ENCODE measurements at regions of chr12 and their contacts with region 1.

Region 1: DNA sequence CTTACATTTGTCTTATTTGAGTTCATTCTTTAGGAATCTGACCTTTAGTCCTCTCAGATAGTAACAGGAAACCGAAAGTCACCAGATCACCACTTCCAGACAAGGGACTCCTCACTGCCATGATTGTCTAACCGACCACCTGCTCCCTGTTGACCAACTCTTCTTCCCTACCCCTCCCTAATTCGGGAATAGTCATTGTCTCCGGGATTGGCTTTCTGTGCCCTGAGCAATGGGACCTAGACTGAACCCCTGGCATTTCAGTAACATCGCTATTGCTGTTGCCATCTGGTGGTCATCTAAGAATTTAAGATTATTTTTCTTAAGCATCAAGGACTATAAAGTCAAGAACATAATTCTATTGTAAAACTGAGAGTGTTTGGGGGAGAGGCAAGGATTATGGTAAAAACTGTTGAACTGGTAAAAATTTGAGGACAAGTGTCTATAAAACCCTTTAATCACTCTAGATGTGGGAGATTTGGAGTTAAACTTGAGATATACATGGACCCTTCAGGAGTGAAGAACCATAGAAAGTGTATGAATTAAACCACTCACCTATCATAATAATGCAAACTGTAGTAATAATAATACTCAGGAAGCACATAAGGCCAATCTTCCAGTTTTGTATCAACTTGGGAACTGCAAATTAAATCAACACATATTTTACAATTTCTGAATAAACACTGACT is 6.3 kb downstream of the CLEC2A start:
- DNase-seq: no peak
- ATAC-seq: peak; percentile 59

Region 2: DNA sequence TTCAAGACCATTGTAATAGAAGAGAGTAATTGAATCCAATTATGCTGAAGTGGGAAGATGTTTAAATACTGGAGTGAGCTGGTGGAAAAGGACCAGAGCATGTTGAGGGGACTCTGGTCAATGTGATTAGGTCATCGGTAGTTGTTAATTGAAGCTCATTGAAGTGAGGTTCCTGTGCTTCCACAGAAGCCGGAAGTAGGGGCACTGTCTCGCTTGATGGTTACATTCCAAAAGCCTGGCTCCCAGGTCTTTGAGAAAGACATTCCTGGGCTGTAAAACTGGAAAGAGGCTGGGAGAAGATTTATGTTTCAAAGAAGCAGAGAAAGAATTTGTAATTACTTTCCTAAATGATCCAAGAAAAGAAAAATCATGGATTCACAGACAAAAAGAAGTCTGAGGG is 180.7 kb before region 1 on chr12:
- intact Hi-C with region 1: loop called (anchors 5 kb)
- DNase-seq: no peak
- ATAC-seq: no peak

Region 3: DNA sequence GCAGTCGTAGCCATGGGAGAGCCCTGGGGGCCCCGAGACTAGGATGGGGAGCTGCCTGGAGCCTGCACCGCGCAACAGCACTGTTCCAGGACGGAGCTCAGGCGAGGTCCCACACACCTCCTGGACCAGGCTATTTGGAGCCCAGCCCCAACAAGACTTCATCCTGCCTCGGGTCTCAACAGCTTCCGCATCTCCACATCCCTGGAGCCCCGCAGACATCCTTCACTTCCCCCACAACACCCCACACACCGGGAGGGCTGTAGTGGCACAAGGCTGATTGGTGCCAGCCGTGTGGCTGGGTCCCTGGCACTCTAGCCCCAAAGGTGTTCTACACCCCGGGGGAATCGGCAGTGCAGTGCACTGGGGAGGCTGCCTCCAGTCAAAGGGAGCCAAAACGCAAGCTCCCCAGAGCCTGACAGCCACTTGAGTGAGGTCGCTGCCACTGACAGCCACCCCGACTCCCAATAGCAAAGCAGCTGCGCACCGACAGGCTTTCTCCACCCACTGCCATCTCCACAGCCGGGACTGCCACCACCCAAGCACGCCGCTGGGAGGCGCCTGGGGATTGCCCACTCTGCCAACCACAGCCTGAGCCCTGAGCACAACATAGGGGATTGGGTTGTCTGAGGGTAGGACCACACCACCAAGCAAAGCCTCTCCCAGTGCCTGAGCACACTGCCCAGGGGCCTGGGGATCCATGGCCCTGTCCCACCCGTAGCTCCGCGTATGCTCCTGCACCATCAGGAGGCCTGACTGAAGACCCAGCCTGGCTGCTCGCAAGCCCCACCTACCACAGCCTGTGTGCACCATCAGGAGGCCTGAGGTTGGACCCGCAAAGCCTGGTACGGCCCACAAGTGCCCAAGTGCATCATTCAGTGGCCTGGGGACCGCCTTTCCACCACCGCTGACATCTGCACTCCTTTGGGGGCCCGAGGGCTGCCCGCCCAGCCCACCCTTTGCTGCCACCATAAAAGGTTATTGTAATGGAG is 111.7 kb before region 1 on chr12:
- intact Hi-C with region 1: loop called (anchors 5 kb)
- DNase-seq: peak; percentile 90
- ATAC-seq: peak; percentile 95

Measured in Right ventricle myocardium superior (tissue), 1 donor.